Heart left ventricle (tissue), 16 donors: ENCODE measurements at regions of chr10 and their contacts with region 1.

Region 1: DNA sequence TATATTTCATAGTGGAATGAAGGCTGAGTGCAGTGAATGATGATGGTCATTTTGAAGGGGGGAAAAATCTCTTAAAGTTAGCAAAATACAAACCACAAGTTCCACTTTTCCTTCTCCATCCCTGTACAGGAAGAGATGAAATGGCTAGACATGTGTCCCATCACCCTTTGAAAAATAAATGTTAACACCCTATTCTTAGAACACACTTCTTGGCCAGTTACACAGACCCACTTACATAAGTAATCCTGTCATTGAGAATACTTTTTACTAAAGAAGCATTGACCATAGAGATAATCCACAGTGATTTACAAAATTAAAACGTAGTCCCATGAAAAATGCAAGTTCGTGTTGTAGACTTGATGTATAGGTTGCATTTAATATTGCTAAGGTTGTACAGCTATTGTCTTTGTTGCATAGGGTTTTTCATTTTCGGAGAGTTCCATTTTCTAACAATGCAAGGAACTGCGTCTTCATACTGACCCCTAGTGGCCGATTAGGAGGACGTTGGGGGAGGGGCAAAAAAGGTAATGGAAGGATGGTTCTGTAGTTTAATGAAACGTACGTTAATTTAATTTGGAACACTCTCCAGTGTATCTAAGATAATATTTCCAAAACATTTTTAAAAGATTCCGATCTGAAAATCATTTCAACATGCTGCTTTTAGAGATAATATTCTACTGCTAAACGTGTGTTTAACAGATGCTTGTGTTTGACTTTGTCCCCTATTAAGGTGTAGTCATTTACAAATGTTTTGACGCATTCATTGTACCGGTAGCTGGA is 60.9 kb downstream of the ARMC3 start:
- DNase-seq: peak in 3 of 5 donors; percentile 30 to 55 (median 43)
- ATAC-seq: peak in 3 of 4 donors; percentile 79 to 86 (median 83)
- H3K4me3 ChIP-seq: peak overlapping the region in 1 of 12 donors; percentile 25
- H3K27ac ChIP-seq: no peak overlapping the region
- H3K4me1 ChIP-seq: peaks cover 0 to 10% (median 0%) of the 10 kb centered on the region in 12 donors
- H3K27me3 ChIP-seq: peaks cover 0 to 11% (median 0%) of the 10 kb centered on the region in 9 donors
- CTCF ChIP-seq: peak; percentile 83 to 97 (median 92)
- POLR2A ChIP-seq: no peak

Region 2: GRCh38 chr10:21989453-21990154 is 999.2 kb before region 1 on chr10:
- intact Hi-C with region 1: loop called in 3 of 10 experiments (anchors 2 to 5 kb)
- DNase-seq: peak in 4 of 5 donors; percentile 15 to 77 (median 50)
- ATAC-seq: peak; percentile 87 to 95 (median 92)
- H3K4me3 ChIP-seq: no peak overlapping the region
- H3K27ac ChIP-seq: peak overlapping the region in 4 of 12 donors; percentile 3 to 44 (median 17)
- H3K4me1 ChIP-seq: peaks cover 0 to 11% (median 2%) of the 10 kb centered on the region in 12 donors
- H3K27me3 ChIP-seq: no peaks in the 10 kb centered on the region
- CTCF ChIP-seq: peak; percentile 16 to 62 (median 44)
- POLR2A ChIP-seq: no peak

Region 3: DNA sequence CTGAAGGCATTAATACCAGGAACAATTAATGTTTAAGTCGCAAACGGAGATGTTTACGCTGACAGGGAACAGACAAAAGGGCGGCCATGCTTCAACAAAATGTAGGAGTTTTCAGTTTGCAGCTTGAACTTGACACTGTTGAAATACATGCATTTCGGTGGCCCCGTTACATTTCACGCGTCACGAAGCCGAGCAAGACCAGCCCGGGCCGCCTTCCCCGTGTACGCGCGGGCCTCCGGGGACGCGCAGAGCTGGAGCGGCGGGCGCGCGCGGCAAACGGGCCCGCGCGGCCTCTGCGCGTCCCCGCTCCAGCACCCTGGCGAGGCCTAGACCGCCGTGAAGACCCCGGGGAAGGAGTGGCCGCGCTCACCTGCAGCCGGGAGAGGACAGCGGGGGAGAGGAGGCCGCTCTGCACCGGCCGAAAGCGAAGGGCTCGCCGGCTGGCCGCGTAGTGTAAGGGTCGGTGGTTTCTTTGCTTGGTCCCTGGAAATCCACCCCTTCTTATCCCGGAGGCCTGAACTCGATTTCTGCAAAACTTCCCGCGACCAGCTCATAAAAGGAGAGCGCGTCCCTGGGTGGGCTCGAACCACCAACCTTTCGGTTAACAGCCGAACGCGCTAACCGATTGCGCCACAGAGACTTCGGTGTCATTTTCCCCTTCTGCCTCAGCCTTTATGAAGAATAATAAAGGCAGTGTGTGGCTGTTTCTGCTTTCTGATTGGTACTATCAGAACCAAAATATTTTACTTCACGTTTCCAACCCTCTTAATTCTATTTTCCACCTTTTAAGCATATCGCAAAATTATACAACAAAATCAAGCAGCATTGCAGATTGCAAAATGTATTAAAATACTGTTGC is 759.6 kb before region 1 on chr10:
- intact Hi-C with region 1: loop called in 1 of 10 experiments (anchors 5 kb)
- DNase-seq: peak; percentile 85 to 90 (median 88)
- ATAC-seq: peak; percentile 91 to 100 (median 98)
- H3K4me3 ChIP-seq: peak overlapping the region; percentile 57 to 89 (median 77)
- H3K27ac ChIP-seq: peak overlapping the region; percentile 85 to 97 (median 92)
- H3K4me1 ChIP-seq: peaks cover 0 to 9% (median 6%) of the 10 kb centered on the region in 12 donors
- H3K27me3 ChIP-seq: no peaks in the 10 kb centered on the region
- CTCF ChIP-seq: no peak
- POLR2A ChIP-seq: peak in 1 of 2 donors; percentile 56

Region 4: DNA sequence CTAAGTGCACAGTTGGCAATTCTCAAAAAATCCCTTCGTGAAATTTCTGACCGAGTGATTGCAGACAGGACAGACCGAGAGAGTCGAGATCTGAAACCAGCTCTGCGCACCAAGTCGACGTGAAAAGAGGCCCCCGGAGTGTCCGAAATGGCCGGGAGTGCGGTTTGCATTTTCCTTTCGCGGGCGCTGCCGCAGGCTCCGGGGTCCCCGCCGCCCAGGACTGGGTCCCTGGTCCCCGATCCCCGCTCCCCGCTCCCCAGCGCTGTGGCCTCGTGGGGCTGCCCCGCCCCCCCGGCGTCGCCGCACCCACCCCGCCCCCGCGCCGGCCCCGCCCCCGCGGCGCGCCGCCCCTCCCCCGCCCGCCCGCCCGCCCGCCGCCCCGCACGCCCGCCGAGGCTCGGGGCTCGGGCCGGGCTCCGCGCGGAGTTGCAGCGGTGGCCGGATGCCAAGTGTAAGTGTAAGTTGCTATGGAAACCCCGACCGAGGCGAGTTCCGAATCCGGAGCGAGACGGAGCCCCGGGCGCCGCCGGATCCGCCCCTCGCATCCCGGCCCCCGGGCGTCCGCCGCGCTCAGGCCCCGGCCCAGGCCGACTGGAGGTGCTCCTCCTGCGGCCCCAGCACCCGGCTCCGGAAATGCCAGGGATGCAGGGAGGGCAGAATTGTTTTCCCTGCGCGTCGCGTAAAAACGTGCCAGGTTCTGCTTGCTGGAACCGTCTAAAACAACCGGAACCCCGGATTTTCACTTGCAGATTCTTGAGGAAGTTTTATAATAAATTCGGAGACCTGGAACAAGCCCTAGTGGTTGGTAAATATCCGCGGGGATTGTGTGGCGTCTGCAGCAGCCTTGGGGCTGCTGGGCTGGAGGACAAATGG is 663.3 kb before region 1 on chr10:
- intact Hi-C with region 1: loop called in 2 of 10 experiments (anchors 10 kb)
- DNase-seq: peak; percentile 80 to 89 (median 85)
- ATAC-seq: peak in 3 of 4 donors; percentile 54 to 67 (median 55)
- H3K4me3 ChIP-seq: peak overlapping the region; percentile 28 to 76 (median 62)
- H3K27ac ChIP-seq: peak overlapping the region in 11 of 12 donors; percentile 48 to 77 (median 65)
- H3K4me1 ChIP-seq: peaks cover 0 to 42% (median 31%) of the 10 kb centered on the region in 12 donors
- H3K27me3 ChIP-seq: peaks cover 0 to 29% (median 0%) of the 10 kb centered on the region in 9 donors
- CTCF ChIP-seq: no peak
- POLR2A ChIP-seq: no peak

Region 5: DNA sequence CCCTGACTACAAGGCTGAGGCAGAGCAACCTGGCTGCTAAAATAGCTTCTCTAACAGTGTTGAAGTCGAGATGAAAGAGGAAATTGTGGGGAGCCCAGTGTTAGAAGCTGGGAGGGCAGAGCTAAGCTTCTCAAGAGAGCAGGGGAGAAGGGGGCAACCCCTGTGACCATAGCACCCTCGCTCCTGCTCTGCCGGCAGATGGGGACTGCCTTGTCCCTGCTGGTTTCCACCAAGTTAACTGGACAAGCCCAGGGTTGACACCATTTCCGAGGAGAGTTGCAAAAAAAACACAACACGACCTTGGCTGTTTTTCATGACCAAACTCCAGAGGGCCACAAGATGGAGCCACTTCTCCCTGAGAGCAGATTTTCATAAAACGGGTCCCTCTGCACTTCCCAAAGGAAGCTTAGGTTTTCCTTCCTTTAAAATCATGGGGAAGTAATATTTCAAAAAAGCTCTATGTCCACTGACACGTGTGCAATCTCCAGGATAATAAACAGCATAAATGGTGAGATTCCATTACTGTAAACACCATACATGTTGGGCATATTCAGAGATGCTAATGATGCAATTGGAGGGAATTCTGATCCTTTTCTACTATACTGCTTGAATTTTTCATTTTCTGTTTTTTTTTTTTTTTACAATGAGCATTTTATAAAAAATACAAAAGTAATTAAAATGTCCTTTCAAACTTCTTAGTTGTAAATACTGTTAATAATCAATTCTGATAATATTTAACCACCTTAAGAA is 414.8 kb before region 1 on chr10:
- intact Hi-C with region 1: loop called in 8 of 10 experiments (anchors 2 to 10 kb)
- DNase-seq: peak in 1 of 5 donors; percentile 24
- ATAC-seq: peak in 2 of 4 donors; percentile 49 to 53
- H3K4me3 ChIP-seq: no peak overlapping the region
- H3K27ac ChIP-seq: no peak overlapping the region
- H3K4me1 ChIP-seq: peaks cover 0 to 15% (median 6%) of the 10 kb centered on the region in 12 donors
- H3K27me3 ChIP-seq: no peaks in the 10 kb centered on the region
- CTCF ChIP-seq: peak in 10 of 12 donors; percentile 22 to 71 (median 37)
- POLR2A ChIP-seq: no peak

Region 6: GRCh38 chr10:22752272-22752889 is 236.4 kb before region 1 on chr10:
- intact Hi-C with region 1: no loop called
- DNase-seq: no peak
- ATAC-seq: no peak
- H3K4me3 ChIP-seq: no peak overlapping the region
- H3K27ac ChIP-seq: no peak overlapping the region
- H3K4me1 ChIP-seq: peaks cover 0 to 16% (median 0%) of the 10 kb centered on the region in 12 donors
- H3K27me3 ChIP-seq: no peaks in the 10 kb centered on the region
- CTCF ChIP-seq: no peak
- POLR2A ChIP-seq: no peak